Activated naive CD4-positive, alpha-beta T cell treated with anti-CD3 and anti-CD28 coated beads, Interleukin-2, amount 10 ng/mL, durations not matched to agents 7 days and 5 days (primary cell): ENCODE measurements at regions of chr5 and their contacts with region 1.

Region 1: GRCh38 chr5:157948738-157949410 is 89.9 kb upstream of the CLINT1 start:
- DNase-seq: peak; percentile 89
- H3K4me3 Mint-ChIP-seq: no peak overlapping the region
- H3K27ac Mint-ChIP-seq: no peak overlapping the region
- H3K4me1 Mint-ChIP-seq: peaks cover 4% of the 10 kb centered on the region
- H3K27me3 Mint-ChIP-seq: peaks cover 25% of the 10 kb centered on the region

Region 2: DNA sequence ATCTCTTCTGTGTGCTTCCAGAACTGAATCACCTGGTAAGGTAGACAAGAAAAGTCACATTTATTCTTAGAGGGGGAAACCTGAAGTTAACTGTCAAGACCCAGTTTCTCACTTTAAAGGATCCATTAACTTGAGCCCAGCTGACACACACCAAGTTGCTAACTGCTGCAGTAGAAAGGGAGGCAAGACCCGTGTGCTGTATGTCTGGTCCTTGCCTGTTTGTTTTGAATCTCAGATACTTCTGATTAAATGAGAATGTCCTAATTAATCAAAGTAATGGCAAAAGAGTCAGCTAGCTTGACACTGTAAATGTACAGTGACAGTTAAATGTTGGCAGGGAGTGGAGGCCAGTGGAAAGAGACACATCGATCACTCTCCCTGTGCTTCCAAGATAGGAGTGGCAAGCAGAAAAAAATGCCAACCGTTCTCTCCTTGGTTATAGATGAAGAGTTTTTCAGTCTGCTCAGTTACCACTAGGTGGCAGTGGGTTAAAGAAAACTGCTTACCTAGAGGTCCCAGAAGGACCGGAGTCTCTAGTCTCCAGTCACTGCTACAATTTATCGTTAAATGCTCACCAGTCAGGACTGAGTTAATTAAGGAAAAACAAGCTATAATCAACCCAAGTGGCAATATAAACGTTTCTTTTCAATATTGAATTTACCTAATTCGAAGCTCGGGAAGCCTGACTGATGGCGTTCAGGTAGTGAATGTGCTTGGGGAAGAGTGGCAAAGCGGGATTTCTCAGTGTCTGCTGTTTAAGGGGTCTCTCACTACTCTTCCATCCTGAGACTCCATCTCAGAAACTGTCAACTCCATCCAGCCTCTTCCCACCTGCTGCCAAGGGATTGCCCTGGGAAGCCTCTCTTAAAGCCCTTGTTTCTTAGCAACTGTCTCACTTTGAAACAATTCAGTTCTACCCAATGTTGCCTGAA is 186.9 kb before region 1 on chr5:
- CTCF ChIA-PET with region 1: interaction called, 41 read pairs
- DNase-seq: peak; percentile 24
- H3K4me3 Mint-ChIP-seq: no peak overlapping the region
- H3K27ac Mint-ChIP-seq: no peak overlapping the region
- H3K4me1 Mint-ChIP-seq: no peaks in the 10 kb centered on the region
- H3K27me3 Mint-ChIP-seq: peaks cover 6% of the 10 kb centered on the region

Region 3: GRCh38 chr5:157800137-157800536 is 148.7 kb before region 1 on chr5:
- CTCF ChIA-PET with region 1: no interaction called
- DNase-seq: no peak
- H3K4me3 Mint-ChIP-seq: no peak overlapping the region
- H3K27ac Mint-ChIP-seq: no peak overlapping the region
- H3K4me1 Mint-ChIP-seq: no peaks in the 10 kb centered on the region
- H3K27me3 Mint-ChIP-seq: no peaks in the 10 kb centered on the region

Region 4: GRCh38 chr5:157812086-157812485 is 136.8 kb before region 1 on chr5:
- CTCF ChIA-PET with region 1: interaction called, 39 read pairs
- DNase-seq: no peak
- H3K4me3 Mint-ChIP-seq: no peak overlapping the region
- H3K27ac Mint-ChIP-seq: no peak overlapping the region
- H3K4me1 Mint-ChIP-seq: no peaks in the 10 kb centered on the region
- H3K27me3 Mint-ChIP-seq: no peaks in the 10 kb centered on the region

Region 5: DNA sequence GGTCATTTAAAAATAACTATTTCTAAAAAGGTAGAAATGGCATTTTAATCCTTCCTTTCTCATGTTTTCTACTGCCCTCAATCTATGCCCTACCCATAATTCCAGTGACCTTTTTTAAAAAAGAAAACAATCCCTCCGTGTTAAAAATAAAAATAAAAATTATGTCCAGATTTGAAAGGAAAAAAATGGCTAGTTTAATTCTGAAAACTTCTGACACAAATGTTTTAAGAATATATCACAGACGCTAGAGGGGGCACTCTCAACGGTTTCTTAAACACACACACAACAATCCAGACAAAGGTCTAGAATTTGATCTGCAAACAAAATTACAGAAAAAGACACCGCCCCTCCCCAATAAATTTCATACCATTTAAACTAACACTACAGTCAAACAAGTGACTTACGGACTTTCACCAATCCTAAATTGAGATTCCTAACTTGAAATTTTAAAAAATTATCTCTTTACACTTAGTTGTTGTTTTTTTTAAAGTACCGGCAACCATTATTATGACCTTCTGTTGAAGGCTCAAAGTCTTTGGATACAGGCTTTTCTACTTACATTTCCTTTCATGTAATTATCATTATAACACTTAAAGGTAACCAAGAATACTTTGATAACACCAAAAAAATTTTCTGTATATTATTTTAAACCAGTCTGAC is 128.2 kb before region 1 on chr5:
- CTCF ChIA-PET with region 1: interaction called, 39 read pairs
- DNase-seq: peak; percentile 25
- H3K4me3 Mint-ChIP-seq: no peak overlapping the region
- H3K27ac Mint-ChIP-seq: no peak overlapping the region
- H3K4me1 Mint-ChIP-seq: peaks cover 12% of the 10 kb centered on the region
- H3K27me3 Mint-ChIP-seq: no peaks in the 10 kb centered on the region

Region 6: DNA sequence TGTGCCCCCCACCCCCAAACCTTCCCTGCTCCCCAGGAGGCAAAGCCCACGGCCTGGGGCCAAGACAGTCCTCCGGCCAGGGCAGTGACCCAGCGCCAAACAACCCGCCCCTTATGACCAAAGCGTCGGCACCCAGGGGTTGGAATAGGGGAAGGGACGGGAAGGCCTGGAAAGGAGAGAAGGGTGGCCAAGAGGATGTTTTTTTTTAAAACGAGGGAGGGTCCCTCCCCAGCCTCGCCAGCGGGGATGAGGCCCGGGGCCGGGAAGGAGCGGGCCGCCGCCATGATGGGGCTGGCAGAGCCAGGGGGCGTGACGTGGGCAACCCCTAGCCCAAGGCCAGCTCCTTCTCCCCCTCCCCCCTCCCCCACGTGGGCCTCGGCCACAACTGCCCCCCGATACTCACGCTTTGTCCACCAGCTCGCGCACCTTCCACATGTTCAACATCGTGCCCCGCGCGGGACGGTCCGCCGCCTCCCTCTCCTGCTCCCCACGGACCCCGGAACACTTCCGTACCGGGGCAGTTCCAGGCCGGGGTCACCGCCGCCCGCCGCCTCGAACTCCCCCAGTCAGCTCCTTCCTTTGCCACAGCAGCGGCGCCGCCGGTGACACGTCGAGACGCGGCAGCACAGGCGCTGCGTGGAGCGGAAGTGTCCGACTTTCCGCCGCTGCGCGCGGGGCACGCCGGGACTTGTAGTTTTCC is 90.2 kb before region 1 on chr5 and contains the start of gene CLINT1:
- CTCF ChIA-PET with region 1: interaction called, 42 read pairs
- DNase-seq: peak; percentile 93
- H3K4me3 Mint-ChIP-seq: peak within 1 kb of the TSS; percentile 93
- H3K27ac Mint-ChIP-seq: peak within 1 kb of the TSS; percentile 94
- H3K4me1 Mint-ChIP-seq: peaks cover 73% of the 10 kb centered on the region
- H3K27me3 Mint-ChIP-seq: no peaks in the 10 kb centered on the region

Region 7: GRCh38 chr5:157917899-157918809 is 30.7 kb before region 1 on chr5:
- CTCF ChIA-PET with region 1: interaction called, 25 read pairs
- DNase-seq: peak; percentile 75
- H3K4me3 Mint-ChIP-seq: no peak overlapping the region
- H3K27ac Mint-ChIP-seq: peak overlapping the region; percentile 79
- H3K4me1 Mint-ChIP-seq: peaks cover 32% of the 10 kb centered on the region
- H3K27me3 Mint-ChIP-seq: no peaks in the 10 kb centered on the region